BJ (cell line): ENCODE measurements at regions of chr11 and their contacts with region 1.

Region 1: GRCh38 chr11:15159085-15159484 is 44.4 kb downstream of the INSC start:
- DNase-seq: no peak
- H3K4me3 ChIP-seq: no peak overlapping the region
- H3K27me3 ChIP-seq: no peaks in the 10 kb centered on the region
- CTCF ChIP-seq: peak; percentile 63

Region 2: GRCh38 chr11:15101072-15101709 is 57.9 kb before region 1 on chr11:
- CTCF ChIA-PET with region 1: interaction called, 31 read pairs
- POLR2A ChIA-PET with region 1: no interaction called
- DNase-seq: no peak
- H3K4me3 ChIP-seq: no peak overlapping the region
- H3K27me3 ChIP-seq: no peaks in the 10 kb centered on the region; the same call in 1 of the 2 replicates
- CTCF ChIP-seq: peak; percentile 96

Region 3: DNA sequence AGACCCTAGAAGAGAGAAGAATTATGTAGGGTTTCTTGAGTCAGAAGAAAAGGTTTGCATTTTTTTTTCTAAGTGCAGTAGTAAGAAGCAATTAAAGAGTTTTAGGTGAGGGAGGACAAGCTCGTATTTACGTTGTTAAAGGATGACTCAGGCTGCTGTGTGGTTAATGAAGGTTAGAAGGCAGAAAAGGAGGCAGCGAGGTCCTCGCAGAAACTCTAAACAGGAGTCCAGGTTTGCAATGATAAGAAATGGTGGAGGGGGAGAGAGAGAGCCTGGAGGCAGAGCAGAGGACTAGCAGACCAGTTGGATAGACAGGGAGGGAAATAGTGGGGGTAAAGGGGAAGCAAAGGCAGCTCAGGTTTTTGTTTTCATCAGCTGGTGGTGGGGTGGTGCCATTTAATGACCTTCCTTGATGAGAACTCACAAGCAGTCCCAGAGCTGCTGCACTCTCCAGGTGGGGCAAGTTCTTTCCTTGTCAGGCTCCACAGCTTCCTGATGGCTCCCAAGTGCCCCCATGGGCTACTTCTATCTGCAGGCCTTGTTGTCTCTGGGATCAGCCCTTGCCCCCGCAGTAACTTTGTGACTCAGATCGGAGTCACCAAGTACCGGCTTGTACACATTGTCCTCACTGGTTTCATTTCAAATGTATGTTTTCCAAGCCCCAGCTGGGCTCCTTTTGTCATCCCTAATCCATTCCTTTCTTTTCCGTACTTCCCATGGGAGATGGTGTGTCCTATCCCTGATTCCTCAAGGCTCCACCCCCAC is 52.7 kb before region 1 on chr11:
- CTCF ChIA-PET with region 1: interaction called, 31 read pairs
- POLR2A ChIA-PET with region 1: no interaction called
- DNase-seq: no peak
- H3K4me3 ChIP-seq: no peak overlapping the region
- H3K27me3 ChIP-seq: no peaks in the 10 kb centered on the region
- CTCF ChIP-seq: no peak

Region 4: GRCh38 chr11:15127341-15127740 is 31.7 kb before region 1 on chr11:
- CTCF ChIA-PET with region 1: interaction called, 11 read pairs
- POLR2A ChIA-PET with region 1: no interaction called
- DNase-seq: no peak
- H3K4me3 ChIP-seq: no peak overlapping the region
- H3K27me3 ChIP-seq: no peaks in the 10 kb centered on the region
- CTCF ChIP-seq: no peak

Region 5: DNA sequence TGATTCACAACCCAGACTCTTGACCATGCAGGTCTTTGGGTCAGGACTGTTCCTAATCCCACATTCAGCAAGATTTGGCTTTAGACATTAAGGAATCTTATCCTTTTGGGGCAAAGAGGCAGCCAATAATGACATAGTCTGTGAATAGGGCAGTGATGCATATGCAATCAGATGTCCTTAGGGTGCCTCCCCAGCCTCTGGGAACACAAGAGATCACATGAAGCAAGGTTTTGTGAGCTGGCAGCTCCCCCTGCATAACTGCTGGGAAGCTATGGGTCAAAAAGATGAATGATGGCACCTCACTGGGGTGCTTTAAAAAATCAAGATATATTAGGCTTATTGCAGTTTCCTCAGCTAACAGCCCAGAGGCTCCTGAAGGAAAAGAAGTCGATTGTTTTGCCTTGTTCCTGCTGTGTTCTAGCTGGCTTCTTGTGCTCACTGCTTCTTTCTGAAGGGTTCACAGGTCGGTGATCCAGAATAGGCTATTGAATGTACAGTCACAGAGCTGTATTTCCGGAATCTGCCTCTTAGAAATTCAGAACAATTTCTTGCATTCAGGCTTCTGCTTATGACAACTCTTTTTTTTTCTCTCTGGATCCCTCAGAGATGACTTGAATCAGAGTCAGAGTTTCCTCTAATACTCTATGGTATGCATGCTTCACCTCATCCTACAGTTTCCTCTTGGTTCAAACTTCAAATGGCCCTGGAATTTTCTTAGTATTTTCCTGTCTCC is 12.6 kb before region 1 on chr11:
- CTCF ChIA-PET with region 1: interaction called, 10 read pairs
- POLR2A ChIA-PET with region 1: no interaction called
- DNase-seq: no peak
- H3K4me3 ChIP-seq: no peak overlapping the region
- H3K27me3 ChIP-seq: no peaks in the 10 kb centered on the region
- CTCF ChIP-seq: no peak

Region 6: GRCh38 chr11:15179167-15179566 is 20.1 kb after region 1 on chr11:
- CTCF ChIA-PET with region 1: interaction called, 12 read pairs
- POLR2A ChIA-PET with region 1: no interaction called
- DNase-seq: peak; percentile 80
- H3K4me3 ChIP-seq: no peak overlapping the region
- H3K27me3 ChIP-seq: no peaks in the 10 kb centered on the region
- CTCF ChIP-seq: no peak

Region 7: DNA sequence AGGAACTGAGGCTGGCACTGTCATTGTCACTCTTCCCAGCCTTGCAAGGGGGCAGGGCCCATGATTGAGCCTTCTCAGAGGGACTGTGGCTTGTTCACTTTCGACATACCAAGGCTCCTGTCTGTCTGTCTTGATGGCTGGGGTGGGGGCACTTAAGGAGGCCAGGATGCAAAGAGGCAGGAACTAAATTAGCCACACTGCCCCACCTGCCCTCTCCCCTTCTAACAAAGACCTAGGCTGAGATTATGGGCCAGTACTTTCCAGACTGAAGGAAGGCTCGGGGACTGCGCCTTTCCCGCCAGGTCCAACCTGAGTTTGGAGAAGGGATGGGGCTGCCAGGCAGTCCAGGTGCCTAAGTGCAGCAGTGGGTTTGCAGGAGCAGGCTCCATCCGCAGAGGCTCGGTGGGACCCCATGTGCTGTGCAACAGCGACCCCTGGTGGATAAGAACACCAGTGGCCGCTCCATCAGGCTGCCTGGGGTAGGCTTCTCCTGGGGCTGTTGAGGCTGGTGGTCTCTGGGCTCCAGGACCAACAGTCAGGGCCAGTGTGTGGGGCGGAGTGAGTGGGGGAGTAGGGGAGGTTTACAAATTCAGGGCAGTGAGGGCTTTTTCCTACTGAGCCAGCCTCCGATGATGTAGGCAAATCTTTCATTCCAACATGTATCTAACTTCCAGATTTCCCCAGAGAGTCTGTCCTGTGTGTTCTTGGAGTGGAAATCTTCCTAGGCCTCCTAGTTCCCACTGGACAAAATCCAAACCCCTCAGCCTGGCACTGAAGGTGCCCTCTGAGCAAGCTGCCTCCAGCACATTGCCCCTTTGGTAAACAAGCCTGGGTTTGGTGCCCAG is 49.5 kb after region 1 on chr11:
- CTCF ChIA-PET with region 1: interaction called, 28 read pairs
- POLR2A ChIA-PET with region 1: no interaction called
- DNase-seq: no peak
- H3K4me3 ChIP-seq: no peak overlapping the region
- H3K27me3 ChIP-seq: peaks cover 6% of the 10 kb centered on the region
- CTCF ChIP-seq: peak; percentile 90

Region 8: GRCh38 chr11:15327786-15328231 is 168.7 kb after region 1 on chr11:
- CTCF ChIA-PET with region 1: no interaction called
- POLR2A ChIA-PET with region 1: no interaction called
- DNase-seq: no peak
- H3K4me3 ChIP-seq: no peak overlapping the region
- H3K27me3 ChIP-seq: no peaks in the 10 kb centered on the region
- CTCF ChIP-seq: peak; percentile 41